ENCODE measurements at regions of chr15 and their contacts with region 1.

Region 1: DNA sequence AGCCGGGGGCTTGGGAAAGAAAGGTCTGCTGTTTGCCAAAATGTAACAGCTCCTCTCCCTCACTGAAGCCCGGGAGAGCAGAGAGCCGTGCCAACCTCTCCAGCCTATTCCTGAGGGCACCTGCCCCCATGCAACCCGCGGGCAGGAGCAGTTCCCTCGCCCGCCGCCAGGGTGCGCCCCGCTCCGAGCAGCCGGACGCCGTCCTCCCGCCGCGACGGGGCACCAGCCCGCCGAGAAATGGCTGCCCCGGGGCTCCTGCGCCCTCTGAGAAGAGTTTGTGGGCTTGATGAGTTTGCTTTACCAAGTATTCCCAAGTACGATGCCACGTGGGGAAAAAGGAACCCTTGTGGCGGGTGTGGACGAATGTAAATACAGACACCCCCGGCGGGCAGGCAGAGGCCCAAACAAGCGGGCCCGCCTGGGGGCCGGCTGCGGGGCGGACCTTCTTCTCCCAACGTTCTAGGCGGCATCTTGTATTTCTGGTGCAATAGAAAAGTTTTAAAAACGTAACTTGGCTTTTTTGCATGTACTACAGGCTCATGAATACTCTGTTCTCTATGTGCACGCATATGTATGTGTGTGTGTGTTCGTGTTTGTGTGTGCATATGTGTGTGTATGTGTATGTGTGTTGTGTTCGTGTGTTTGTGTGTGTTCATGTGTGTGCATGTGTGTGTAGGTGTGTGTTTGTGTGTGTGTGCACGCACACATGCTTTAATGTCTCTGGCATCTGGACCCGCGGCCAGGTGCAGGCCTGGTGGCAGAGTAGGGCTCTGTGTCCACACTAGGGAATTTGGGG is 162.9 kb downstream of the CHSY1 start:
- DNase-seq: peak; percentile 47 to 97 (median 81)
- ATAC-seq: peak; percentile 91 to 97 (median 94)
- H3K4me3 ChIP-seq: peak overlapping the region in 1 of 4 donors; percentile 30
- H3K27ac ChIP-seq: no peak overlapping the region
- H3K4me1 ChIP-seq: no peaks in the 10 kb centered on the region
- H3K27me3 ChIP-seq: no peaks in the 10 kb centered on the region
- CTCF ChIP-seq: peak; percentile 99 to 100 (median 100)

Region 2: GRCh38 chr15:101017093-101017754 is 71.8 kb before region 1 on chr15:
- intact Hi-C with region 1: no loop called
- DNase-seq: no peak
- ATAC-seq: no peak
- H3K4me3 ChIP-seq: no peak overlapping the region
- H3K27ac ChIP-seq: no peak overlapping the region
- H3K4me1 ChIP-seq: no peaks in the 10 kb centered on the region
- H3K27me3 ChIP-seq: no peaks in the 10 kb centered on the region
- CTCF ChIP-seq: no peak

Region 3: GRCh38 chr15:101269479-101270223 is 180.7 kb after region 1 on chr15:
- intact Hi-C with region 1: loop called (anchors 5 to 10 kb)
- DNase-seq: no peak
- ATAC-seq: peak in 3 of 4 donors; percentile 15 to 45 (median 26)
- H3K4me3 ChIP-seq: no peak overlapping the region
- H3K27ac ChIP-seq: no peak overlapping the region
- H3K4me1 ChIP-seq: peaks cover 0 to 9% (median 4%) of the 10 kb centered on the region in 3 donors
- H3K27me3 ChIP-seq: no peaks in the 10 kb centered on the region
- CTCF ChIP-seq: no peak